CD4-positive, alpha-beta memory T cell (primary cell): ENCODE measurements at regions of chr17 and their contacts with region 1.

Region 1: DNA sequence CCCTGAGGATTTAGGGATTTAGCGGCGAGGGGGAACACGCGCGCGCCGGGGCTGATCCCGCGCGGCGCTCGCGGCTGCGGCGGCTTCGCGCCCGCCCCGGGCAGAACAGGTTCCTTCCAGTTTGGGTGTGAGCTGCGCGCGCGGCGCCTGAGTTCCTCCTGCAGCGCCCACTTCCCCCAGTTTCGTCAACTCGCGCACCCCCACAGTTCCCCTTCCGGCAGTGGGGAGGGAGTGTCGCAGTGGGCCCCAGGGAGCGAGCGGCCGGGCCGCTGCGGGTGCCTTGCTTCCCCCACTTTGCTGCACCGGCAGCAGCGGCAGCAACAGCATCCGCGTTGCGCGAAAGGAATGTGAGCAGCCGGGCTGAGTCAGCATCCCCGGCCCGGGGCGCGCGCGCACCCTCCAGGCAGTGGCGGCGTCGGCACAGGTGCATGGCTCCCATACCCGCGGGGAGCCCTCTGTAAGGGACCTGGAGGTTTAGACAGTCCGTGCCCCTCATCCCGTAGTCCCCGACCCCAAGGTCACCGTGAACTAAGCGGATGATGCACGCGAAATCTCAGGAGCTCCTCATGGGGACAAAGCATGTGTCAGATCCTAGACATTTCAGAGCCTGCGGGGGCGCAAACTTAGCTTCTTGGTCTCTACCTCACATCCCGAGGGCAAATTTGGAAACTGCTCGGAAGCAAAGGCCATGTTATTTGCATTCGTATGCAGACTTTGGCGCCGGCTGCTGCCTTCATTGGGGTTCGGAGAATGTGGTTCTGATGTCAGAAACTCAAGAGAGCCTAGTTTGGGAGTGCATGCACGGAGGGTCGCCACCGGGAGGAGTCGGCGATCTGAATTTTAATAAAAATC is 775 bp downstream of the ARSG start:
- DNase-seq: peak; percentile 96 to 98 (median 97)
- H3K4me3 ChIP-seq: peak overlapping the region; percentile 18 to 90
- H3K4me3 Mint-ChIP-seq: peak overlapping the region; percentile 74 to 87 (median 84)
- H3K27ac ChIP-seq: peak overlapping the region; percentile 90
- H3K27ac Mint-ChIP-seq: peak overlapping the region; percentile 89 to 99 (median 93)
- H3K4me1 ChIP-seq: peaks cover 78% of the 10 kb centered on the region
- H3K4me1 Mint-ChIP-seq: peaks cover 53 to 84% (median 63%) of the 10 kb centered on the region in 4 donors
- H3K27me3 ChIP-seq: no peaks in the 10 kb centered on the region
- H3K27me3 Mint-ChIP-seq: no peaks in the 10 kb centered on the region

Region 2: GRCh38 chr17:67829331-67829730 is 462.7 kb before region 1 on chr17:
- CTCF ChIA-PET with region 1: no interaction called
- POLR2A ChIA-PET with region 1: no interaction called
- intact Hi-C with region 1: no loop called
- DNase-seq: peak; percentile 3 to 62 (median 11)
- H3K4me3 ChIP-seq: no peak overlapping the region
- H3K4me3 Mint-ChIP-seq: peak overlapping the region; percentile 57 to 95 (median 82)
- H3K27ac ChIP-seq: no peak overlapping the region
- H3K27ac Mint-ChIP-seq: peak overlapping the region in 5 of 7 donors; percentile 22 to 75 (median 55)
- H3K4me1 ChIP-seq: peaks cover 67% of the 10 kb centered on the region
- H3K4me1 Mint-ChIP-seq: peaks cover 43 to 76% (median 57%) of the 10 kb centered on the region in 4 donors
- H3K27me3 ChIP-seq: no peaks in the 10 kb centered on the region
- H3K27me3 Mint-ChIP-seq: peaks cover 0 to 3% of the 10 kb centered on the region in 2 donors

Region 3: DNA sequence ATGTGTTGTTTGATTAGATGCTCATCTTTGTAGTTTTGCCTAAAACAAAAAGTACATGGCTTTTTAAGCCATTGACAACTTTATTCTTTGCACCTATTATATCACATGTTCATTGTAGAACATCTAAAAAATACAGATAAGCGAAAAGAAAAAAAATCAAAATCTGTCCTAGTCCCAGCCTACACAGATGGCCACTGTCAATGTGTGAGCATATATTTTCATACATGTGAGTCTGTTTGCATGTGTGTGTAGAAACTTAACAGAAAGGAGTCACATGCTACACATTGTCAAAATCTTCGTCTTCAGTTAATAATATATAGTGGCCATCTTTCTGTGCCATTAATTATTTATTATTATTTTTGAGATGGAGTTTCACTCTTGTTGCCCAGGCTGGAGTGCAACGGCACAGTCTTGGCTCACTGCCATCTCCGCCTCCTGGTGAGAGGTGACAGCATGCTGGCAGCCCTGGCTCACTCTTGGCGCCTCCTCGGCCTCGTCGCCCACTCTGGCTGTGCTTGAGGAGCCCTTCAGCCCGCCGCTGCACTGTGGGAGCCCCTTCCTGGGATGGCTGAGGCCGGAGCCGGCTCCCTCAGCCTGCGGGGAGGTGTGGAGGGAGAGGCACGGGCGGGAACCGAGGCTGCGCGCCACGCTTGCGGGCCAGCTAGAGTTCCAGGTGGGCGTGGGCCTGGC is 112.7 kb before region 1 on chr17:
- CTCF ChIA-PET with region 1: no interaction called
- POLR2A ChIA-PET with region 1: interaction called, 34 read pairs
- intact Hi-C with region 1: loop called (anchors 5 kb)
- DNase-seq: no peak
- H3K4me3 ChIP-seq: no peak overlapping the region
- H3K4me3 Mint-ChIP-seq: no peak overlapping the region
- H3K27ac ChIP-seq: no peak overlapping the region
- H3K27ac Mint-ChIP-seq: peak overlapping the region in 2 of 7 donors; percentile 40 to 56
- H3K4me1 ChIP-seq: peaks cover 33% of the 10 kb centered on the region
- H3K4me1 Mint-ChIP-seq: peaks cover 17 to 46% (median 30%) of the 10 kb centered on the region in 4 donors
- H3K27me3 ChIP-seq: no peaks in the 10 kb centered on the region
- H3K27me3 Mint-ChIP-seq: no peaks in the 10 kb centered on the region

Region 4: DNA sequence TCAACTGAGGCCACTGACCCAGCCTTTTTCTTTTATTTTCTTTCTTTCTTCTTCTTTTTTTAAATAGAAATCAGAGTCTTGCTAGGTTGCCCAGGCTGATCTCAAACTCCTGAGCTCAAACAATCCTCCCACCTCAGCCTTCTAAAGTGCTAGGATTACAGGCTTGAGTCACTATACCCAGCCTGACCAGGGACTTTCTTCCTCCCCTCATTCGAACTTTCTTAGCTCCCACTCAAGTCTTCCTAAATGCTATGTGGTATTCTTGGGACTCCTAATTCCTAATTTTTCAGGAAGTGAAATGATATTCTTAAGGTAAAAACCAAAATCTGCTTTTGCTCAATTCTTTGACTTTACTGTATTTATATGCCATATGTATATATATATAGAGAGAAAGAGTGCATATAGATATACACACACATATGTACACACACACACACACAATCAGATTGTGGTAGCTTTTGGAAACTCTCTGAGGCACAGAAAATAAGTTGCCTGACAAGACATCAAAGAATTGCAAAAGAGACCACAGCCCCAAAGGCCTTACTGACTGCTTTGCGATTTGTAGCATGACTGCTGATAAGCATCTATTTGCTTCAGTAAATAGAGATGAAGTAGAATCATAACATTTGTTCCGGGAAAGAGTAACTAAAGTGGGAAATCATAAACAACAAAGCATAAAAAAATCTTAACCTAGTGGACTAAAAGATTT is 53.8 kb before region 1 on chr17:
- CTCF ChIA-PET with region 1: interaction called, 5 read pairs
- POLR2A ChIA-PET with region 1: interaction called, 10 read pairs
- intact Hi-C with region 1: no loop called
- DNase-seq: peak; percentile 53 to 84 (median 63)
- H3K4me3 ChIP-seq: peak overlapping the region; percentile 45 to 61
- H3K4me3 Mint-ChIP-seq: peak overlapping the region; percentile 80 to 92 (median 86)
- H3K27ac ChIP-seq: peak overlapping the region; percentile 93
- H3K27ac Mint-ChIP-seq: peak overlapping the region; percentile 92 to 100 (median 97)
- H3K4me1 ChIP-seq: peaks cover 58% of the 10 kb centered on the region
- H3K4me1 Mint-ChIP-seq: peaks cover 47 to 67% (median 54%) of the 10 kb centered on the region in 4 donors
- H3K27me3 ChIP-seq: no peaks in the 10 kb centered on the region
- H3K27me3 Mint-ChIP-seq: no peaks in the 10 kb centered on the region

Region 5: DNA sequence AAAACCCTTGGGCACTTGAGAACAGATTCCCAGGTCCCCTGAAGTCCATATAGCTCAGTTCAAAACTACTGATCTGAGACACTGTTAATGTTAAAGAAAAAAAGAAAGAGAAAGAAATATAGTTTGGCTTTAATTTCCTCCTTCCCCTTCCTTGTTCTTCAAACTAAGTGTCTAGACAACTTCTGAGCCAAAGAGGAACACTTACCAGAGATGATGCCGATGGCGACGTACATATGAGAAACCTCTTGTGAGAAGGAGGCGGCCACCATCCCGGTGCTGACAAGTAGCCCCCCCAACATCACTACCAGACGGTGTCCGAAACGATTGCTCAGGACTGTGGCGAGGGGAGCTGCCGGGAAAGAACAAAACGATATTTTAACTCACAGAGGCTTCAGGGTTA is 18.3 kb before region 1 on chr17:
- CTCF ChIA-PET with region 1: interaction called, 4 read pairs
- POLR2A ChIA-PET with region 1: interaction called, 35 read pairs
- intact Hi-C with region 1: no loop called
- DNase-seq: no peak
- H3K4me3 ChIP-seq: no peak overlapping the region
- H3K4me3 Mint-ChIP-seq: no peak overlapping the region
- H3K27ac ChIP-seq: no peak overlapping the region
- H3K27ac Mint-ChIP-seq: peak overlapping the region in 3 of 7 donors; percentile 25 to 68 (median 29)
- H3K4me1 ChIP-seq: no peaks in the 10 kb centered on the region
- H3K4me1 Mint-ChIP-seq: peaks cover 0 to 10% (median 5%) of the 10 kb centered on the region in 4 donors
- H3K27me3 ChIP-seq: no peaks in the 10 kb centered on the region
- H3K27me3 Mint-ChIP-seq: no peaks in the 10 kb centered on the region

Region 6: GRCh38 chr17:68318103-68318991 is 26.3 kb after region 1 on chr17:
- CTCF ChIA-PET with region 1: interaction called, 6 read pairs
- POLR2A ChIA-PET with region 1: interaction called, 43 read pairs
- intact Hi-C with region 1: no loop called
- DNase-seq: no peak
- H3K4me3 ChIP-seq: no peak overlapping the region
- H3K4me3 Mint-ChIP-seq: no peak overlapping the region
- H3K27ac ChIP-seq: no peak overlapping the region
- H3K27ac Mint-ChIP-seq: no peak overlapping the region
- H3K4me1 ChIP-seq: peaks cover 48% of the 10 kb centered on the region
- H3K4me1 Mint-ChIP-seq: peaks cover 25 to 66% (median 46%) of the 10 kb centered on the region in 4 donors
- H3K27me3 ChIP-seq: no peaks in the 10 kb centered on the region
- H3K27me3 Mint-ChIP-seq: no peaks in the 10 kb centered on the region

Region 7: DNA sequence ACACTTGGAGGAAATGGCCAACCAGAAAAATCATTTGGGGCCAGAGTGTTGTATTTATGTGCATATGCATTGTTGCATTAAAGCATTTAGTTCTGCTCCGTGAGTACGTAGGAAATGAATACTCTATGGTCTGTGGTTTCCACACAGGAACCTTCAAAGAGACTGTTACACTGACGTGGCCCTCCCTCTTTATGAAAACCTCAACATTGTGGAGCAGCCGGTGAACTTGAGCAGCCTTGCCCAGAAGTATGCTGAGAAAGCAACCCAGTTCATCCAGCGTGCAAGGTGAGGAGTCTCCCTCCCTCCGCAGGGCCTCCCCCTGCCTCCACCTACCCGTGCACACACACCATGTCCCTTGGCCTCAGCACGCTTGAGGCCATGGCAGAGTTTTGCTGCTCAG is 64.5 kb after region 1 on chr17:
- CTCF ChIA-PET with region 1: interaction called, 21 read pairs
- POLR2A ChIA-PET with region 1: interaction called, 149 read pairs
- intact Hi-C with region 1: loop called (anchors 1 kb)
- DNase-seq: peak; percentile 81 to 86 (median 83)
- H3K4me3 ChIP-seq: peak overlapping the region in 1 of 2 donors; percentile 21
- H3K4me3 Mint-ChIP-seq: peak overlapping the region; percentile 72 to 90 (median 78)
- H3K27ac ChIP-seq: peak overlapping the region; percentile 41
- H3K27ac Mint-ChIP-seq: peak overlapping the region; percentile 77 to 94 (median 92)
- H3K4me1 ChIP-seq: peaks cover 63% of the 10 kb centered on the region
- H3K4me1 Mint-ChIP-seq: peaks cover 37 to 70% (median 54%) of the 10 kb centered on the region in 4 donors
- H3K27me3 ChIP-seq: no peaks in the 10 kb centered on the region
- H3K27me3 Mint-ChIP-seq: no peaks in the 10 kb centered on the region

Region 8: GRCh38 chr17:68435876-68436842 is 144.1 kb after region 1 on chr17:
- CTCF ChIA-PET with region 1: interaction called, 11 read pairs
- POLR2A ChIA-PET with region 1: interaction called, 90 read pairs
- intact Hi-C with region 1: loop called (anchors 1 kb)
- DNase-seq: peak; percentile 82 to 84 (median 83)
- H3K4me3 ChIP-seq: no peak overlapping the region
- H3K4me3 Mint-ChIP-seq: peak overlapping the region in 7 of 8 donors; percentile 36 to 91 (median 67)
- H3K27ac ChIP-seq: no peak overlapping the region
- H3K27ac Mint-ChIP-seq: peak overlapping the region; percentile 79 to 97 (median 88)
- H3K4me1 ChIP-seq: peaks cover 51% of the 10 kb centered on the region
- H3K4me1 Mint-ChIP-seq: peaks cover 37 to 60% (median 45%) of the 10 kb centered on the region in 4 donors
- H3K27me3 ChIP-seq: no peaks in the 10 kb centered on the region
- H3K27me3 Mint-ChIP-seq: no peaks in the 10 kb centered on the region